PC-3 (cell line): ENCODE measurements at regions of chr2 and their contacts with region 1.

Region 1: DNA sequence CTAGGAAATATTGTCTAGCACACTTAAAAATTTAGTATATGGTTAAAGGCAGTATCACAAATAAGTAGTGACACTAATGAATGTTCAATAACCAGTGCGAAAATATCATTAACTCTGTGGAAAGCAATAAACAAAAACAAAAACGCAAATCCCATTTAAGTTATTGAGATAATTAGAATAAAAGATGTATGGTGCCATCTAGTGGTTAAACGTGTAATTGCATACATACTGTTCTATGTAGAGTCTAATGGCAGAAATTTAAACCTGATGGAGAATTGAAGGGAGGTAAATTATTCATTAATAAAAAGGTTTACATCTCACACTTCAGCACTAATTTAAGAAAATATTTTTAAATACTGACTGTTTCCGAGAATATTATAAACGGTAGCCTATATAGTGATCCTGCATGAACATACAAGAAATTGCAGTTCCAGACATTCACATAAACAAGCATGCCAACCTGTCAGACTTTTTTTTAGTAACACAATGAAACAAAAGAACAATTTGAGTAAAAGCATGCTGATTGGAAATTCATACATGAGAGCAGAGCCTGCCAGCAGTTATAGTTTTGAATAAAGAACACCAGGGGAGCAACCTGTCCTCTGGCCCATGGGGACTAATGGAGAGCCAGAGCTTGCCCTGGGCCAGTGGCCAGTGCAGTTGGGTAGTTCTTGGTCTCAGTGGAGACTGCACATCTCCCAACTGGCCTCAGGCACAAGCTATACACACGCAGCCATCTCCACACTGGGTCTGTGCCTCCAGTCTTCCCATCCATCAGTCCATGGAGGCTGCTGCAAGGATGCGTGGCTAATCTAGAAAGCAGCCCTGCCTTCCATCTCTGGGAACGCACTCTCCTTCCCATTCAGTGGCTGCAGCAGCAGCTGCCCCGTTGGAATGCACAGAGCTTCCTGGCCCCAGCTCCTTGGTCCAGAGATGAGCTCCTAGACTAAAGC is 28.0 kb downstream of the GCG start:
- DNase-seq: peak; percentile 88
- ATAC-seq: peak; percentile 55
- H3K4me3 ChIP-seq: no peak overlapping the region
- H3K27ac ChIP-seq: no peak overlapping the region
- H3K4me1 ChIP-seq: peaks cover 18% of the 10 kb centered on the region
- H3K27me3 ChIP-seq: no peaks in the 10 kb centered on the region
- CTCF ChIP-seq: peak; percentile 91

Region 2: DNA sequence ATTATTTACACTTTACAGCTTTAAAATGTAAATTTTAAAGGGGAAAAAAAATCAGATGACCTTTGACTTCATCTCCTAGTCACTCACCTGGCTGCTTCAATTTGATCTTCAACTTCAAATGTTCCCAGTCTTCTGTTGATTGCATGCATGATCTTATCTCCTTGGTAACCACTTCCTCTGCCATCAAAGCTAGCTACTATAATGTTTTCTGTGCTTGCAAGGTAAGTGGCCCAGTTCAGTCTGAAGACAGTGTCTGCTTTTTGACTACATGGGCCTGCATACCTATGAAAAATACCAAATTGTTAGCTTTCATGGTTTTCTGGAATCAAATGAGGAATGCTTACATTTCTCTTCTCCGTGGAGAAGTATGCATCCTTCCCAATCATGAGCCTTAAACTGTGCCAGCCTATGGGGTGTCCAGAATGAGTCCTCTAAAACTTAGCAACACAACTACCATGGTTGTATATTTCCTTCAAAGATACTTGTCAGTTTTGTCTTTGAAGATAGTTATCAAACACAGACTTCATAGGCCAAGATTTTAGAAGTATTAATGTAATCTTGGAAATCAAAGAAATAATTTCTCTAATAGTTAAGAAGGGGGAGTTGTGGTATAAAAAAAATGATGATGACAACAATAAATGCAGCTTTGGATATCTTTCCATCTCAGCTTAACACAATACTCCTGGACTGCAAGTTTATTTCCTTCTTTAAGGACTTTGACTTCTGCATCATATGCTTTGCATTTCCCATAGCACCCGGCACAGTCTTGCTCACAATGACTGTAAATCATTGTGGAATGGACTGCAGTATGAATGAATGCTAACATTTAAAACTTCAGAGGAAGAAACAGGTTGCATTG is 112.1 kb before region 1 on chr2:
- CTCF ChIA-PET with region 1: no interaction called
- POLR2A ChIA-PET with region 1: no interaction called
- intact Hi-C with region 1: loop called (anchors 2 kb)
- DNase-seq: no peak
- ATAC-seq: no peak
- H3K4me3 ChIP-seq: no peak overlapping the region
- H3K27ac ChIP-seq: no peak overlapping the region
- H3K4me1 ChIP-seq: peaks cover 27% of the 10 kb centered on the region
- H3K27me3 ChIP-seq: no peaks in the 10 kb centered on the region
- CTCF ChIP-seq: no peak

Region 3: DNA sequence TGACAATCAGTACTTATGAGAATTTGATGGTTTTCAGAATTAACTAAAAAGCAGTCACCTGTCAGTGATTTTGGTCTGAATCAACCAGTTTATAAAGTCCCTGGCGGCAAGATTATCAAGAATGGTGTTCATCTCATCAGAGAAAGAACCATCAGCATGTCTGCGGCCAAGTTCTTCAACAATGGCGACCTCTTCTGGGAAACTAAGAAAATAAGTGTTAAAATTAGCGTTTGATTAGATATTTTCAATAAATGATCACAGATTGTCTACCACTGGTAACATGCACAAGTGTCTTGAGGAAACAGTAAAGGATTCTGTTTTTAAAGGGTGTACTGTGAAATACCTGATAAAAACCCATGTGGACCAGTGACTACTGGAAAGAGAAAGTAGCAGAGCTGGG is 19.9 kb after region 1 on chr2:
- CTCF ChIA-PET with region 1: interaction called, 14 read pairs
- POLR2A ChIA-PET with region 1: no interaction called
- intact Hi-C with region 1: no loop called
- DNase-seq: no peak
- ATAC-seq: no peak
- H3K4me3 ChIP-seq: no peak overlapping the region
- H3K27ac ChIP-seq: no peak overlapping the region
- H3K4me1 ChIP-seq: peaks cover 13% of the 10 kb centered on the region
- H3K27me3 ChIP-seq: no peaks in the 10 kb centered on the region
- CTCF ChIP-seq: peak; percentile 49

Region 4: GRCh38 chr2:162196638-162197037 is 72.6 kb after region 1 on chr2:
- CTCF ChIA-PET with region 1: no interaction called
- POLR2A ChIA-PET with region 1: no interaction called
- intact Hi-C with region 1: no loop called
- DNase-seq: peak; percentile 85
- ATAC-seq: peak; percentile 78
- H3K4me3 ChIP-seq: peak overlapping the region; percentile 20; the same call in 1 of the 2 replicates
- H3K27ac ChIP-seq: peak overlapping the region; percentile 67
- H3K4me1 ChIP-seq: peaks cover 40% of the 10 kb centered on the region
- H3K27me3 ChIP-seq: no peaks in the 10 kb centered on the region
- CTCF ChIP-seq: no peak

Region 5: DNA sequence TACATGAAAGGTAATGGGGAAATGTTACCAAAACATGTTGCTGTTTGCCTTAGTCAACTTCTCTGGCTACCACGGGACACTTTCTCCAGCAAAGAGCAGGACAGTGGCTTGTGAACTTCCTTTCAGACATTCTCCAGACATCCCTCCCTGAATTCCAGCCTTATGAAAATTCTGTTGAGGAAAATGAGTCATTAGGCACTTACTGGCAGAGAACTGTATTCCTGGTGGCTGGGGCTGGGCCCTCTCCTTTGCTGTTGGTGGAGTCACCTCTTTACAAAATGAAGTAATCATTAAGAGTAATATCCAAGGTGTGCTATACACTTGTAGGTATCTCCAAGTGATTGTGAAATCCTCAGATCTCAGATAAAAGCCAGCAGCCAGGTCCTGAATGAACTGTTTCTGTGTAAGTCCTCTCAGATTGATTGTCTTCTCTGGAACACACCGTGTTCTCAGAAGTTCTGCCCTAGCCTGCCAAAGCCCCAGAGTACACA is 120.5 kb after region 1 on chr2:
- CTCF ChIA-PET with region 1: no interaction called
- POLR2A ChIA-PET with region 1: no interaction called
- intact Hi-C with region 1: no loop called
- DNase-seq: peak; percentile 91
- ATAC-seq: peak; percentile 92
- H3K4me3 ChIP-seq: no peak overlapping the region
- H3K27ac ChIP-seq: peak overlapping the region; percentile 42
- H3K4me1 ChIP-seq: peaks cover 35% of the 10 kb centered on the region
- H3K27me3 ChIP-seq: no peaks in the 10 kb centered on the region
- CTCF ChIP-seq: no peak

Region 6: GRCh38 chr2:162370931-162371330 is 246.8 kb after region 1 on chr2:
- CTCF ChIA-PET with region 1: no interaction called
- POLR2A ChIA-PET with region 1: no interaction called
- intact Hi-C with region 1: no loop called
- DNase-seq: no peak
- ATAC-seq: no peak
- H3K4me3 ChIP-seq: no peak overlapping the region
- H3K27ac ChIP-seq: no peak overlapping the region
- H3K4me1 ChIP-seq: no peaks in the 10 kb centered on the region
- H3K27me3 ChIP-seq: peaks cover 9% of the 10 kb centered on the region; the same call in 1 of the 2 replicates
- CTCF ChIP-seq: no peak